HCT116 (cell line): ENCODE measurements at regions of chr9 and their contacts with region 1.

Region 1: GRCh38 chr9:104494808-104495207 is 9.3 kb upstream of the OR13F1 start:
- DNase-seq: no peak
- ATAC-seq: 0 out of 2 replicates have a peak, but pooled peaks have one; percentile 36
- H3K4me3 ChIP-seq: no peak overlapping the region
- H3K27ac ChIP-seq: no peak overlapping the region
- H3K4me1 ChIP-seq: no peaks in the 10 kb centered on the region
- H3K27me3 ChIP-seq: no peaks in the 10 kb centered on the region
- CTCF ChIP-seq: peak in 2 of 3 experiments; percentile 10 to 19; a peak in 2 of 6 replicates
- POLR2A ChIP-seq: no peak
- RAD21 ChIP-seq: peak; percentile 36

Region 2: DNA sequence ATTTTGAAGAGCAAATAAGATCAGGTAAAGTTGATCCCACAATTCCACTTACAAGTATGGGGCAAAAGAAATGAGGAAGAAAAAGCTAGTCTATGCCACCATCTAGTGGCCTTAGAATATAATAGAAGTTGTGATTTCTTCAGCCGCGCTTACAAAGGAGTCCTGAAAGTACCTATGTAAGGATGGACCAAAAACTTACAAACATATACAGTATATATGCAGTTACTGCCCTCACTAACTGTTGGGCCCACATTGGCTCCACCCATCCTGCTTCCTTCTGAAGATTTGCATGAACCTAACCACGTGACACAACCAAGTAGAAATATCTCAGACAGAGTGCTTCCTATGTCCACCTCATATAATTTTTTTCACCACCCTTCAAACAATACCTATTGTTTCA is 187.8 kb after region 1 on chr9:
- CTCF ChIA-PET with region 1: no interaction called
- POLR2A ChIA-PET with region 1: no interaction called
- RAD21 ChIA-PET with region 1: no interaction called
- intact Hi-C with region 1: loop called (anchors 2 kb)
- DNase-seq: peak; percentile 53
- ATAC-seq: peak; percentile 87
- H3K4me3 ChIP-seq: no peak overlapping the region
- H3K27ac ChIP-seq: no peak overlapping the region
- H3K4me1 ChIP-seq: no peaks in the 10 kb centered on the region
- H3K27me3 ChIP-seq: no peaks in the 10 kb centered on the region
- CTCF ChIP-seq: peak; percentile 36 to 67 (median 47); a peak in 4 of 6 replicates
- POLR2A ChIP-seq: no peak
- RAD21 ChIP-seq: peak; percentile 73